Naive thymus-derived CD4-positive, alpha-beta T cell (primary cell): ENCODE measurements at regions of chr14 and their contacts with region 1.

Region 1: GRCh38 chr14:63727774-63728728 is at the start of gene SGPP1:
- DNase-seq: peak; percentile 60 to 83 (median 77)
- ATAC-seq: peak; percentile 95
- H3K4me3 ChIP-seq: peak within 1 kb of the TSS; percentile 99
- H3K4me3 Mint-ChIP-seq: peak within 1 kb of the TSS; percentile 97 to 100 (median 99)
- H3K27ac ChIP-seq: peak within 1 kb of the TSS; percentile 89
- H3K27ac Mint-ChIP-seq: peak within 1 kb of the TSS; percentile 94 to 99 (median 97)
- H3K4me1 ChIP-seq: peaks cover 11 to 16% of the 10 kb centered on the region in 2 donors
- H3K4me1 Mint-ChIP-seq: peaks cover 29 to 51% (median 44%) of the 10 kb centered on the region in 7 donors
- H3K27me3 ChIP-seq: no peaks in the 10 kb centered on the region
- H3K27me3 Mint-ChIP-seq: peaks cover 0 to 22% (median 0%) of the 10 kb centered on the region in 5 donors
- total RNA-seq, gene SGPP1: 15.1 to 17.7 (median 15.7) TPM

Region 2: GRCh38 chr14:63650256-63650952 is 77.6 kb before region 1 on chr14:
- CTCF ChIA-PET with region 1: interaction called, 10 read pairs
- POLR2A ChIA-PET with region 1: interaction called, 105 read pairs
- intact Hi-C with region 1: loop called in 1 of 2 experiments (anchors 1 kb)
- DNase-seq: peak in 7 of 9 donors; percentile 76 to 92 (median 87)
- ATAC-seq: peak; percentile 98
- H3K4me3 ChIP-seq: peak overlapping the region; percentile 3
- H3K4me3 Mint-ChIP-seq: peak overlapping the region; percentile 38 to 95 (median 75)
- H3K27ac ChIP-seq: peak overlapping the region; percentile 89
- H3K27ac Mint-ChIP-seq: peak overlapping the region; percentile 90 to 100 (median 100)
- H3K4me1 ChIP-seq: peaks cover 25 to 45% of the 10 kb centered on the region in 2 donors
- H3K4me1 Mint-ChIP-seq: peaks cover 21 to 69% (median 53%) of the 10 kb centered on the region in 7 donors
- H3K27me3 ChIP-seq: no peaks in the 10 kb centered on the region
- H3K27me3 Mint-ChIP-seq: no peaks in the 10 kb centered on the region

Region 3: GRCh38 chr14:63717702-63718101 is 10.3 kb before region 1 on chr14:
- CTCF ChIA-PET with region 1: interaction called, 5 read pairs
- POLR2A ChIA-PET with region 1: interaction called, 6 read pairs
- intact Hi-C with region 1: loop called in 1 of 2 experiments (anchors 1 kb)
- DNase-seq: peak in 4 of 9 donors; percentile 24 to 47 (median 36)
- ATAC-seq: no peak
- H3K4me3 ChIP-seq: no peak overlapping the region
- H3K4me3 Mint-ChIP-seq: peak overlapping the region in 1 of 10 donors; percentile 12
- H3K27ac ChIP-seq: no peak overlapping the region
- H3K27ac Mint-ChIP-seq: no peak overlapping the region
- H3K4me1 ChIP-seq: peaks cover 0 to 11% of the 10 kb centered on the region in 2 donors
- H3K4me1 Mint-ChIP-seq: peaks cover 12 to 33% (median 27%) of the 10 kb centered on the region in 7 donors
- H3K27me3 ChIP-seq: no peaks in the 10 kb centered on the region
- H3K27me3 Mint-ChIP-seq: no peaks in the 10 kb centered on the region

Region 4: DNA sequence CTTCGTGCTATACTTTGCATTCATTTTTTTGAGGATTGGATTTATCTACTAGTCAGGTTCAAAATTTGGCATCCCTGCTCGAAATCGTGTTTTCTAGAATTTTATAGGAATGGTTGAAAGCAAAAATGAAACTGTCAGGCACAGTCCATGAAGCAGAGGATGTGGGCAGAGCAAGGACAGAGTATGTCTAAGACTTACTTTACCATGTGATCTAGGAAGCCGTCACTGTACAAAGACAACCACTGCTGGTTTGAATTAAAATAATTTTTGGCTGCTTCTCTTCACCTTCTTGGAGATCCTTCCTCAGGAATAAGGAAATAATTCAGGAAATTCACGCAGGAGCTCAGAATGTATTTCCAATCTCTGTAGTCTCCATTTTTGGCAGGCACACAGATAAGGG is 31.4 kb after region 1 on chr14:
- CTCF ChIA-PET with region 1: no interaction called
- POLR2A ChIA-PET with region 1: interaction called, 4 read pairs
- intact Hi-C with region 1: loop called in 1 of 2 experiments (anchors 1 kb)
- DNase-seq: peak in 7 of 9 donors; percentile 24 to 61 (median 50)
- ATAC-seq: peak; percentile 89
- H3K4me3 ChIP-seq: peak overlapping the region; percentile 2
- H3K4me3 Mint-ChIP-seq: peak overlapping the region; percentile 57 to 89 (median 82)
- H3K27ac ChIP-seq: peak overlapping the region; percentile 75
- H3K27ac Mint-ChIP-seq: peak overlapping the region; percentile 84 to 98 (median 93)
- H3K4me1 ChIP-seq: peaks cover 4 to 8% of the 10 kb centered on the region in 2 donors
- H3K4me1 Mint-ChIP-seq: peaks cover 11 to 19% (median 17%) of the 10 kb centered on the region in 7 donors
- H3K27me3 ChIP-seq: no peaks in the 10 kb centered on the region
- H3K27me3 Mint-ChIP-seq: no peaks in the 10 kb centered on the region

Region 5: GRCh38 chr14:63852817-63853731 is 125.0 kb after region 1 on chr14 and contains the start of gene SYNE2:
- CTCF ChIA-PET with region 1: no interaction called
- POLR2A ChIA-PET with region 1: no interaction called
- intact Hi-C with region 1: loop called (anchors 5 kb)
- DNase-seq: peak; percentile 67 to 89 (median 80)
- ATAC-seq: peak; percentile 90
- H3K4me3 ChIP-seq: peak within 1 kb of the TSS; percentile 52
- H3K4me3 Mint-ChIP-seq: peak within 1 kb of the TSS; percentile 85 to 99 (median 98)
- H3K27ac ChIP-seq: peak within 1 kb of the TSS; percentile 72
- H3K27ac Mint-ChIP-seq: peak within 1 kb of the TSS; percentile 77 to 98 (median 91)
- H3K4me1 ChIP-seq: peaks cover 29 to 39% of the 10 kb centered on the region in 2 donors
- H3K4me1 Mint-ChIP-seq: peaks cover 30 to 44% (median 42%) of the 10 kb centered on the region in 7 donors
- H3K27me3 ChIP-seq: no peaks in the 10 kb centered on the region
- H3K27me3 Mint-ChIP-seq: peaks cover 0 to 25% (median 0%) of the 10 kb centered on the region in 5 donors
- total RNA-seq, gene SYNE2: 77.7 to 170 (median 149) TPM